ENCODE measurements at regions of chr6 and their contacts with region 1.

Region 1: GRCh38 chr6:137799950-137800568 is 67.0 kb upstream of the TNFAIP3 start:
- DNase-seq: peak in 1 of 10 donors; percentile 34
- H3K4me3 ChIP-seq: no peak overlapping the region
- H3K27ac ChIP-seq: no peak overlapping the region
- H3K27me3 ChIP-seq: no peaks in the 10 kb centered on the region
- CTCF ChIP-seq: peak; percentile 31 to 72 (median 58)

Region 2: GRCh38 chr6:137866914-137867684 is 67.0 kb after region 1 on chr6 and contains the start of gene TNFAIP3:
- intact Hi-C with region 1: loop called (anchors 5 kb)
- DNase-seq: peak; percentile 40 to 86 (median 74)
- H3K4me3 ChIP-seq: peak within 1 kb of the TSS; percentile 58 to 95 (median 86)
- H3K27ac ChIP-seq: peak within 1 kb of the TSS in 51 of 59 donors; percentile 9 to 90 (median 73)
- H3K27me3 ChIP-seq: peaks cover 0 to 9% (median 0%) of the 10 kb centered on the region in 45 donors
- CTCF ChIP-seq: peak; percentile 29 to 96 (median 79)
- total RNA-seq, gene TNFAIP3: 1.6 to 33.7 (median 5.7) TPM

Region 3: DNA sequence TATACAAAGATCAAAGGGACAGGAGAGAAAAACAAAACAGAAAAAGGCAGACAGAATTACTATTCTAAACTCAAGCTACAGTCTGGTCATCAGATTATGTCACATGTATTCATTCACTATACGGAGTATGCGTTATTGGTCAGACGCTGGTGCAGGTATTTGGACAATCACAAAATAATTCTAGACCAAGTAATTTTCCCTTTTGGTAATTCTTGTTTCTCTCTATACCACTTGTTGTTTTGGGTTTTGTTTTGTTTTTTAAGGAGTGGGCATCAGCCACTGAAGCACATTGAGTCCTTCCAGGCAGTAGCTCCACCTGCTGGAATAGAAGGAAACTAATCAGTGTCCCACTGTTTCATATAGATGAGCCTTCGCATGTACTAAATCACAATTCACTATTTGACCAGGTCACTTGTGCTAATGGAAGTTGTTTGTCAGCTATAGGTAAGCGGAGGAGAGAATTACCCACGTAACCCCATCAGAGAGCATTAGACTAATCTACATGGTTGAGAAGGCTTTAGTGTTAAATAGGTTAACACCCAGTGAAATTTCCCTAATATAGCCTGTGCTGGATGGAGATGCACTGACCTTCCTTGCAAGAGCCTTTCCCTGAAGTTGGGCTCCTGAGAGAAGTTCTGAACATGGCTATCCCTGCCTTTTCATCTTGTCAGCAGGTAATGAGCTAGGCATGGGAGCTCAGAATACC is 144.9 kb after region 1 on chr6:
- intact Hi-C with region 1: loop called in 1 of 2 experiments (anchors 10 kb)
- DNase-seq: no peak
- H3K4me3 ChIP-seq: no peak overlapping the region
- H3K27ac ChIP-seq: no peak overlapping the region
- H3K27me3 ChIP-seq: no peaks in the 10 kb centered on the region
- CTCF ChIP-seq: peak; percentile 29 to 86 (median 68)

Region 4: DNA sequence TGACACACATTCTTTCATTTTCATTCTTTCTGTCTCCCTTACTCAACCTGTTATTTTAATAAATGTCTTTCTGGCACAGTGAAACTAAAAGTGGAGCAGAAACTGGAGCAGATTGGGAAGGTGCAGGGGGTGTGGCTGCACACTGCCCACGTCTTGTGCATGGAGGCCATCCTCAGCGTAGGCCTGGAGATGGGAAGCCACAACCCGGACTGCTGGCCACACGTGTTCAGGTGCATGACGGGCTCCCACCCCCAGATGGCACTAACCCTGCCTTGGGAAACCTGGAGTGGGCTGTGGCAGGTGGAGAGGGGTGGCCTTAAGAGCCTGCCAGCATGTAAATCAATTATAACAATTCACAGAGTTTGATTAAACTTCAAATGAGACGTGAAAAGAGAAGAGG is 489.7 kb after region 1 on chr6:
- intact Hi-C with region 1: no loop called
- DNase-seq: peak in 2 of 10 donors; percentile 10 to 32
- H3K4me3 ChIP-seq: no peak overlapping the region
- H3K27ac ChIP-seq: peak overlapping the region in 19 of 59 donors; percentile 1 to 61 (median 20)
- H3K27me3 ChIP-seq: no peaks in the 10 kb centered on the region
- CTCF ChIP-seq: no peak